ENCODE measurements at regions of chr20 and their contacts with region 1.

Region 1: DNA sequence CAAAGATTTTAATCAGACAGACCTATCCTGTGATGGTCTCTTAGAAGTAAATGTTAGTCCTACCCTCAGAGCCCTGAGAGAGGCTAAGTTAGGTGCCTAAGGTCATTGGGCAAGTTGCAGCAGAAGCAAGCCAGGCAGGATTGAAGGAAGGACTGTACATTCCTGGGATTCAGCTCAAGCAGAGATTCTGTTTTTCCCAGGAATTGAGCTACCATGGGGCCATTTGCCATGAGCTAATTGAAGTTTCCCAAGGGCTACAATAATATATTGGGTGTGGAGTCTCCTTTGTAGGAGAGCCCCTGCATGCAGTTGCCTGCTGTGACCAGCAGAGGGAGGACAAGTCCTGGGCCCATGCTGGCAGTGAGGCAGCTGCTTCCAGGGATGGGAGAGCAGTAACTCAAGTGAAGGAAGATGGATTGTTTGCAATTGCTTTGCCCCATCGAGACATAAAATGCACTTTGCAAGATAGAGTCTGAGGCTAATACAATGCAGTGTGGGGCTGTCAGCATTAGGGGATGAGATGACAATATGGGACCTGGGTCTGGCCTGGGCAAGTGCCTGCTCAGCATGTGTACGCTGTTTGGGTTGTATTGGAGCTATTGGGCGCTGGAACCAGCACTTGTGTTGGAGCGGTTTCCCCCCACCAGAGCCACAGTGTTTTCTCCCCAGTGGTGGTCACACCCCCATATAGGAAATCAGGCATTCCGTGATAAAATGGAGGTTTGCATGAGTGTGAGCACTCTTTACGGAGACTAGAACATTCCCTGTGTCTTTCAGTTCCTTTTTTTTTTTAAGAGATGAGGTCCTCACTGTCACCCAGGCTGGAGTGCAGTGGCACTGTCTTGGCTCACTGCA is 27.9 kb downstream of the DNMT3B start:
- DNase-seq: peak; percentile 80

Region 2: GRCh38 chr20:32681175-32682084 is 108.7 kb before region 1 on chr20:
- in situ Hi-C with region 1: loop called (anchors 25 kb)
- DNase-seq: no peak

Region 3: GRCh38 chr20:32839227-32839981 is 49.3 kb after region 1 on chr20:
- in situ Hi-C with region 1: no loop called
- DNase-seq: peak; percentile 81

Region 4: GRCh38 chr20:32871627-32872160 is 81.6 kb after region 1 on chr20:
- in situ Hi-C with region 1: no loop called
- DNase-seq: no peak